ENCODE measurements at regions of chr11 and their contacts with region 1.

Region 1: GRCh38 chr11:41309716-41310115 is 149.7 kb downstream of the LRRC4C start:
- DNase-seq: no peak
- H3K4me3 ChIP-seq: no peak overlapping the region
- H3K27ac ChIP-seq: no peak overlapping the region
- H3K4me1 ChIP-seq: no peaks in the 10 kb centered on the region
- H3K27me3 ChIP-seq: no peaks in the 10 kb centered on the region
- CTCF ChIP-seq: no peak

Region 2: GRCh38 chr11:41175304-41175972 is 134.3 kb before region 1 on chr11:
- CTCF ChIA-PET with region 1: no interaction called
- dilution Hi-C with region 1: no loop called
- in situ Hi-C with region 1: no loop called
- intact Hi-C with region 1: no loop called
- DNase-seq: peak; percentile 8
- H3K4me3 ChIP-seq: no peak overlapping the region
- H3K27ac ChIP-seq: no peak overlapping the region
- H3K4me1 ChIP-seq: no peaks in the 10 kb centered on the region
- H3K27me3 ChIP-seq: no peaks in the 10 kb centered on the region
- CTCF ChIP-seq: peak in 1 of 2 donors; percentile 53

Region 3: DNA sequence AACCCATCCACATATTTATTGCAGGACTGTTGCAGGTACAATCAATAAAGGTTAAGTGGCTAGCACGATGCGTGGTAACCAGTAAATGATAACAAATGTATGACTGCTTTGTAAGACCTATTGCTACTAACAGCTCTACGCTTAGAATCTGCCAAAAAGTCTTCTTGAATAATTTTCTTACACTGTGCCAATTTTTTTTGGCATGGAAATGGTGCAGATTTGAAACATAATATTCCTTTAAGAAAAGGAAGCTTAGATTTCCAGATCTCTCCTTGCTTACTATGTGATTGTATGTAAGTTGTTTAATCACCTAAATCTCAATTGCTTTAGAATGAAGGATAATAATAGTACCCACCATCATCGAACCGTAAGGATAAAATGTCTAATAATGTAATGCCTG is 42.3 kb before region 1 on chr11:
- CTCF ChIA-PET with region 1: no interaction called
- dilution Hi-C with region 1: loop called (anchors 10 kb)
- in situ Hi-C with region 1: no loop called
- intact Hi-C with region 1: no loop called
- DNase-seq: no peak
- H3K4me3 ChIP-seq: no peak overlapping the region
- H3K27ac ChIP-seq: no peak overlapping the region
- H3K4me1 ChIP-seq: no peaks in the 10 kb centered on the region
- H3K27me3 ChIP-seq: no peaks in the 10 kb centered on the region
- CTCF ChIP-seq: no peak

Region 4: GRCh38 chr11:42075180-42075579 is 765.5 kb after region 1 on chr11:
- CTCF ChIA-PET with region 1: no interaction called
- dilution Hi-C with region 1: no loop called
- in situ Hi-C with region 1: no loop called
- intact Hi-C with region 1: no loop called
- DNase-seq: no peak
- H3K4me3 ChIP-seq: no peak overlapping the region
- H3K27ac ChIP-seq: no peak overlapping the region
- H3K4me1 ChIP-seq: no peaks in the 10 kb centered on the region
- H3K27me3 ChIP-seq: no peaks in the 10 kb centered on the region
- CTCF ChIP-seq: no peak